ENCODE measurements at regions of chr3 and their contacts with region 1.

Region 1: GRCh38 chr3:196837819-196838420 is 29.8 kb upstream of the SENP5 start:
- DNase-seq: peak in 7 of 10 donors; percentile 10 to 89 (median 51)

Region 2: DNA sequence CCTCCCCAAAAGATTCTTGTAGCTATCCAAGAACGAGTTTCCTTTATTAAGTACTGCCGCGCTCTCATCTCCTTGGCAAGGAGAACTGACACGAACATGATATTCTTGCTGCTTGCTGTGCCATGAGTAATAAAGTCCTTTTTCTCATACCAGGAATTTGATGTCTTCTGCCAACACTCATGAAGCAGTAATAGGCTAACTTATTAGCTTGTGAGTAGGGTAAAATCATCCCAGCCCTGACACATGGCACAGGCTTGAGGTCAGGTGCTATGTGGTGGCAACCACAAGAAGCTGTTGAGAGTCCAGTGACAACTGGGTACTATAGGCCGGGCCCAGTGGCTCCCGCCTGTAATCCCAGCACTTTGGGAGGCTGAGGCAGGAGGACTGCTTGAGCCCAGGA is 383.0 kb before region 1 on chr3:
- intact Hi-C with region 1: no loop called
- DNase-seq: no peak

Region 3: GRCh38 chr3:196969660-196970546 is 132.0 kb after region 1 on chr3:
- intact Hi-C with region 1: loop called (anchors 10 kb)
- DNase-seq: peak in 6 of 10 donors; percentile 35 to 92 (median 59)